ENCODE measurements at regions of chr12 and their contacts with region 1.

Region 1: GRCh38 chr12:15979096-15980092 is 68.3 kb downstream of the DERA start:
- DNase-seq: peak; percentile 52 to 56
- H3K4me3 ChIP-seq: no peak overlapping the region
- H3K4me3 Mint-ChIP-seq: peak overlapping the region; percentile 13
- H3K27ac Mint-ChIP-seq: peak overlapping the region; percentile 80
- H3K4me1 ChIP-seq: peaks cover 49% of the 10 kb centered on the region
- H3K4me1 Mint-ChIP-seq: peaks cover 38% of the 10 kb centered on the region
- H3K27me3 ChIP-seq: no peaks in the 10 kb centered on the region
- H3K27me3 Mint-ChIP-seq: no peaks in the 10 kb centered on the region
- CTCF ChIP-seq: peak; percentile 44 to 84

Region 2: GRCh38 chr12:15733136-15733535 is 246.3 kb before region 1 on chr12:
- CTCF ChIA-PET with region 1: no interaction called
- POLR2A ChIA-PET with region 1: no interaction called
- intact Hi-C with region 1: no loop called
- DNase-seq: no peak
- H3K4me3 ChIP-seq: no peak overlapping the region
- H3K4me3 Mint-ChIP-seq: no peak overlapping the region
- H3K27ac Mint-ChIP-seq: no peak overlapping the region
- H3K4me1 ChIP-seq: 0 out of 2 replicates have a peak, but pooled peaks cover 8% of the 10 kb centered on the region
- H3K4me1 Mint-ChIP-seq: peaks cover 12% of the 10 kb centered on the region
- H3K27me3 ChIP-seq: no peaks in the 10 kb centered on the region
- H3K27me3 Mint-ChIP-seq: no peaks in the 10 kb centered on the region
- CTCF ChIP-seq: no peak

Region 3: GRCh38 chr12:15910864-15911721 is 68.3 kb before region 1 on chr12 and contains the start of gene DERA:
- CTCF ChIA-PET with region 1: interaction called, 4 read pairs
- POLR2A ChIA-PET with region 1: interaction called, 3 read pairs
- intact Hi-C with region 1: loop called (anchors 1 kb)
- DNase-seq: peak; percentile 91 to 94
- H3K4me3 ChIP-seq: peak within 1 kb of the TSS; percentile 87
- H3K4me3 Mint-ChIP-seq: peak within 1 kb of the TSS; percentile 88
- H3K27ac Mint-ChIP-seq: peak within 1 kb of the TSS; percentile 93
- H3K4me1 ChIP-seq: peaks cover 22% of the 10 kb centered on the region
- H3K4me1 Mint-ChIP-seq: no peaks in the 10 kb centered on the region
- H3K27me3 ChIP-seq: no peaks in the 10 kb centered on the region
- H3K27me3 Mint-ChIP-seq: no peaks in the 10 kb centered on the region
- CTCF ChIP-seq: no peak
- total RNA-seq, gene DERA: 84.3 and 86.4 TPM in 2 replicates

Region 4: GRCh38 chr12:15931590-15932053 is 47.8 kb before region 1 on chr12:
- CTCF ChIA-PET with region 1: no interaction called
- POLR2A ChIA-PET with region 1: no interaction called
- intact Hi-C with region 1: loop called (anchors 5 kb)
- DNase-seq: peak in 1 of 2 experiments; percentile 34
- H3K4me3 ChIP-seq: no peak overlapping the region
- H3K4me3 Mint-ChIP-seq: no peak overlapping the region
- H3K27ac Mint-ChIP-seq: peak overlapping the region; percentile 29
- H3K4me1 ChIP-seq: peaks cover 13% of the 10 kb centered on the region
- H3K4me1 Mint-ChIP-seq: peaks cover 20% of the 10 kb centered on the region
- H3K27me3 ChIP-seq: no peaks in the 10 kb centered on the region
- H3K27me3 Mint-ChIP-seq: no peaks in the 10 kb centered on the region
- CTCF ChIP-seq: peak; percentile 9 to 27

Region 5: DNA sequence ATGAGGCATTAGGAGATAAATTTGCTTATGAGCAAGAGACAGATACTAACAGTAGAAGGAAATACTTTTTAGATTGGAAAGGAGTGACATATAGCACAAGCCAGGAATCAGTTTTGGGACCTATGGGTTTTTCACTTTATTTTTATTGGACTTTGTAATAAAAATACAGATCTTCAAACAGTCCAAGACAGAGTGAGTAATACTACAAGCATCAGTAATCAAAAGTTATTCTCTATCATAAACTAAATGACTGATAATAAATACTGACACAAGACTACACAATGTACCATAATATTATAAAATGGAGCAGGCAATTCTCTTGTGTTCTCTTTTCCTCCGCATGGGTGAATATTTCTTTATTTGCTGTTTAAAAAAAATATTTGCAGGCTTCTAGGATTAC is 17.6 kb after region 1 on chr12:
- CTCF ChIA-PET with region 1: no interaction called
- POLR2A ChIA-PET with region 1: no interaction called
- intact Hi-C with region 1: no loop called
- DNase-seq: no peak
- H3K4me3 ChIP-seq: no peak overlapping the region
- H3K4me3 Mint-ChIP-seq: no peak overlapping the region
- H3K27ac Mint-ChIP-seq: no peak overlapping the region
- H3K4me1 ChIP-seq: no peaks in the 10 kb centered on the region; the same call in 1 of the 2 replicates
- H3K4me1 Mint-ChIP-seq: peaks cover 4% of the 10 kb centered on the region
- H3K27me3 ChIP-seq: no peaks in the 10 kb centered on the region
- H3K27me3 Mint-ChIP-seq: no peaks in the 10 kb centered on the region
- CTCF ChIP-seq: no peak

Region 6: GRCh38 chr12:16030729-16031128 is 51.3 kb after region 1 on chr12:
- CTCF ChIA-PET with region 1: no interaction called
- POLR2A ChIA-PET with region 1: no interaction called
- intact Hi-C with region 1: loop called (anchors 2 kb)
- DNase-seq: peak; percentile 80 to 81
- H3K4me3 ChIP-seq: no peak overlapping the region
- H3K4me3 Mint-ChIP-seq: no peak overlapping the region
- H3K27ac Mint-ChIP-seq: peak overlapping the region; percentile 81
- H3K4me1 ChIP-seq: peaks cover 24% of the 10 kb centered on the region
- H3K4me1 Mint-ChIP-seq: peaks cover 23% of the 10 kb centered on the region
- H3K27me3 ChIP-seq: no peaks in the 10 kb centered on the region
- H3K27me3 Mint-ChIP-seq: no peaks in the 10 kb centered on the region
- CTCF ChIP-seq: no peak

Region 7: DNA sequence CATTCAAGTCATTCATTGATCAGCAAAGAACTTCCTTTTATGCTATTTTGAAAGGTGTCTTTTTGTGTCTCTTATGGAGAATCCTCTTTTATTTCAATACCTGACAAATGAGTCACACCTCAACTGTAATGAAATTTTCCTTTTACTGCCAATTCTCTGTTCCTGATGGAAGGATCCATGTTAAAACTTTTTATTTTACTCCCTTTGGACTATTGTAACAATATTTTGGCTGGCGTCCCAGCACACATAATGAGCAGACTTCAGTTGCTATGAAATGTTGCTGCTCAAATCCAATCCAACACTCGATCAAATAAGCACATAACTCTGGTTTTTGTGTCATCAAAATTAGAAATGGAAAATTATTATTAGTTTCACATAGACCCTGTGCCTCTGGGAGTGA is 320.0 kb after region 1 on chr12:
- CTCF ChIA-PET with region 1: no interaction called
- POLR2A ChIA-PET with region 1: no interaction called
- intact Hi-C with region 1: no loop called
- DNase-seq: no peak
- H3K4me3 ChIP-seq: no peak overlapping the region
- H3K4me3 Mint-ChIP-seq: no peak overlapping the region
- H3K27ac Mint-ChIP-seq: no peak overlapping the region
- H3K4me1 ChIP-seq: no peaks in the 10 kb centered on the region
- H3K4me1 Mint-ChIP-seq: no peaks in the 10 kb centered on the region
- H3K27me3 ChIP-seq: no peaks in the 10 kb centered on the region
- H3K27me3 Mint-ChIP-seq: peaks cover 8% of the 10 kb centered on the region
- CTCF ChIP-seq: no peak

Region 8: GRCh38 chr12:16347391-16348298 is 368.3 kb after region 1 on chr12 and contains the start of gene MGST1:
- CTCF ChIA-PET with region 1: no interaction called
- POLR2A ChIA-PET with region 1: no interaction called
- intact Hi-C with region 1: loop called (anchors 5 kb)
- DNase-seq: peak; percentile 83 to 87
- H3K4me3 ChIP-seq: peak within 1 kb of the TSS; percentile 60
- H3K4me3 Mint-ChIP-seq: peak within 1 kb of the TSS; percentile 96
- H3K27ac Mint-ChIP-seq: peak within 1 kb of the TSS; percentile 98
- H3K4me1 ChIP-seq: peaks cover 36% of the 10 kb centered on the region
- H3K4me1 Mint-ChIP-seq: peaks cover 59% of the 10 kb centered on the region
- H3K27me3 ChIP-seq: no peaks in the 10 kb centered on the region
- H3K27me3 Mint-ChIP-seq: no peaks in the 10 kb centered on the region
- CTCF ChIP-seq: no peak
- total RNA-seq, gene MGST1: 105 and 122 TPM in 2 replicates

Region 9: GRCh38 chr12:16359512-16360491 is 380.4 kb after region 1 on chr12:
- CTCF ChIA-PET with region 1: no interaction called
- POLR2A ChIA-PET with region 1: no interaction called
- intact Hi-C with region 1: loop called (anchors 5 kb)
- DNase-seq: peak; percentile 79 to 87
- H3K4me3 ChIP-seq: no peak overlapping the region
- H3K4me3 Mint-ChIP-seq: no peak overlapping the region
- H3K27ac Mint-ChIP-seq: no peak overlapping the region
- H3K4me1 ChIP-seq: no peaks in the 10 kb centered on the region
- H3K4me1 Mint-ChIP-seq: no peaks in the 10 kb centered on the region
- H3K27me3 ChIP-seq: no peaks in the 10 kb centered on the region
- H3K27me3 Mint-ChIP-seq: no peaks in the 10 kb centered on the region
- CTCF ChIP-seq: peak; percentile 95 to 98

Measured in Caco-2 (cell line).